ENCODE measurements at regions of chr5 and their contacts with region 1.

Region 1: GRCh38 chr5:4520557-4520956 is 619.6 kb upstream of the ADAMTS16 start:
- DNase-seq: no peak
- H3K4me3 Mint-ChIP-seq: no peak overlapping the region
- H3K27ac Mint-ChIP-seq: no peak overlapping the region
- H3K4me1 Mint-ChIP-seq: no peaks in the 10 kb centered on the region
- H3K27me3 Mint-ChIP-seq: no peaks in the 10 kb centered on the region
- CTCF ChIP-seq: peak; percentile 16

Region 2: DNA sequence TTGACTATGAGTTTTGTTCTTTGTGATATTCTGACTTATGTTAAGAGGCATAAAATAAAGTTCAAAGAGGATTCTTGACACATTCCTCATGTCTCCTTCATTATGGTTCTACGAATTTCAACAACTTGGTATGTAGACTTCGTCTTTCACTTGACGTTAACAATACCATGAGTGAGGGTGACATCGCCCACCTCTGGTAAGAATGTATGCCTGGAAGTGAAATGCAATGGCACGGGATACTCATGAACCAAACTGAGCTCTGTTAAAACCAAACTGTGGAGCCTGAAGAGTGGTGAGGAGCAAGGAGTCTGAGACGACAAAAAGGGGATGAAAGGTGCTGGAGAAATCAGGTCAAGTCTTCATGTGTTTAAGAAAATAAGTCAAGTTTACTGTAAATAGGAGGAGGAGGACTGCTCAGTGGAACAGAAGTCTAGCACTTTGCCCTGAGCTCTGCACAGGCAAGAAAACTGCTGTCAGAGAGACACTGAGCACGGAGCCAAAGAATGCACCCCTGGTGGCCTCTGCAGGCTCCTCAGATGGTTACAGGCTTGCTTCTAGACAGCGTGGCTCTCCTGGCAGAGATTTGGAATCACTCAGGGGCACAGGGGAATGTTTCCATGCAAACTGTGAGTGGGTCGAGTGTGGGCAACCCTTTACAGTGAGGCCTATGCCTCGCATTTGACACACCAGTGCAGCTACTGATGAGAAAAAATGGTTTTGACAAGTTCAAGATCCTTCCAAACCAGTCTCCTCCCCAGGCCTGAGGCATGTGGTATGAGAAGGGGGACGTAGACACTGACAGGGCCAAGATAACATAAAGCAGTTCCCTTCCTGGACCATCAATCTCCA is 454.9 kb before region 1 on chr5:
- CTCF ChIA-PET with region 1: no interaction called
- POLR2A ChIA-PET with region 1: no interaction called
- intact Hi-C with region 1: no loop called
- DNase-seq: no peak
- H3K4me3 Mint-ChIP-seq: no peak overlapping the region
- H3K27ac Mint-ChIP-seq: no peak overlapping the region
- H3K4me1 Mint-ChIP-seq: no peaks in the 10 kb centered on the region
- H3K27me3 Mint-ChIP-seq: no peaks in the 10 kb centered on the region
- CTCF ChIP-seq: no peak

Region 3: GRCh38 chr5:4640795-4641194 is 120.2 kb after region 1 on chr5:
- CTCF ChIA-PET with region 1: interaction called, 5 read pairs
- POLR2A ChIA-PET with region 1: no interaction called
- intact Hi-C with region 1: loop called (anchors 2 kb)
- DNase-seq: peak; percentile 30
- H3K4me3 Mint-ChIP-seq: no peak overlapping the region
- H3K27ac Mint-ChIP-seq: no peak overlapping the region
- H3K4me1 Mint-ChIP-seq: no peaks in the 10 kb centered on the region
- H3K27me3 Mint-ChIP-seq: no peaks in the 10 kb centered on the region
- CTCF ChIP-seq: peak; percentile 2

Region 4: DNA sequence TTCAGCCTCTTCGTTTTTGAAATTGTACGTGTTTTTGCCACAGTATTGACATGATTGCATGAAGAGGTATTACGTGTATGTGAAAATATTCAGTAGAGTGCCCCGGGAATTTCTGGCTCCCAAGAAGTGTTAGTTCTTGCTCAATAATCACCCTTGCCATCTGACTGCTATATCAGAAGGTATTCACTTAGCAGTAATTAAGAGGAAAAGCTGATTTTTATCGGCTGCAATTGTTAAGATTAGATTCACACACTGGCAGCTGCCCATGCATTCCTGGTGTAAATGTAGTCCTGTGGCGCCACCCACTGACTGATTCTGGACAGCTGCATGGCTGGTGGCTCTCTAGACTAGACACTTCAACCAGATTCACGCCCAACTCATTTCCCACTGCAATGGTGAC is 179.5 kb after region 1 on chr5:
- CTCF ChIA-PET with region 1: interaction called, 7 read pairs
- POLR2A ChIA-PET with region 1: no interaction called
- intact Hi-C with region 1: loop called (anchors 1 kb)
- DNase-seq: peak; percentile 68
- H3K4me3 Mint-ChIP-seq: peak overlapping the region; percentile 21
- H3K27ac Mint-ChIP-seq: no peak overlapping the region
- H3K4me1 Mint-ChIP-seq: no peaks in the 10 kb centered on the region
- H3K27me3 Mint-ChIP-seq: no peaks in the 10 kb centered on the region
- CTCF ChIP-seq: peak; percentile 56

Region 5: GRCh38 chr5:4862500-4862899 is 341.9 kb after region 1 on chr5:
- CTCF ChIA-PET with region 1: interaction called, 6 read pairs
- POLR2A ChIA-PET with region 1: no interaction called
- intact Hi-C with region 1: loop called (anchors 1 kb)
- DNase-seq: peak; percentile 48
- H3K4me3 Mint-ChIP-seq: no peak overlapping the region
- H3K27ac Mint-ChIP-seq: no peak overlapping the region
- H3K4me1 Mint-ChIP-seq: no peaks in the 10 kb centered on the region
- H3K27me3 Mint-ChIP-seq: no peaks in the 10 kb centered on the region
- CTCF ChIP-seq: peak; percentile 65

Measured in MCF 10A (cell line).